ENCODE measurements at regions of chr3 and their contacts with region 1.

Region 1: GRCh38 chr3:107753480-107753879 is 230.7 kb downstream of the BBX start:
- DNase-seq: no peak
- H3K4me3 ChIP-seq: no peak overlapping the region
- H3K27ac ChIP-seq: no peak overlapping the region
- H3K4me1 ChIP-seq: no peaks in the 10 kb centered on the region
- H3K27me3 ChIP-seq: no peaks in the 10 kb centered on the region
- CTCF ChIP-seq: peak; percentile 47 to 71 (median 53)
- EP300 ChIP-seq: no peak
- POLR2A ChIP-seq: no peak
- RAD21 ChIP-seq: peak; percentile 42 to 46

Region 2: GRCh38 chr3:107574650-107575049 is 178.8 kb before region 1 on chr3:
- CTCF ChIA-PET with region 1: interaction called, 13 read pairs
- POLR2A ChIA-PET with region 1: interaction called, 3 read pairs
- DNase-seq: no peak
- H3K4me3 ChIP-seq: no peak overlapping the region
- H3K27ac ChIP-seq: no peak overlapping the region
- H3K4me1 ChIP-seq: peaks cover 2 to 10% (median 8%) of the 10 kb centered on the region in 4 experiments; a peak in 4 of 7 replicates
- H3K27me3 ChIP-seq: no peaks in the 10 kb centered on the region
- CTCF ChIP-seq: peak in 2 of 3 experiments; percentile 44 to 54; a peak in 2 of 4 replicates
- EP300 ChIP-seq: no peak
- POLR2A ChIP-seq: no peak
- RAD21 ChIP-seq: peak; percentile 78

Region 3: GRCh38 chr3:107660306-107660976 is 93.0 kb before region 1 on chr3:
- CTCF ChIA-PET with region 1: interaction called, 10 read pairs
- POLR2A ChIA-PET with region 1: no interaction called
- DNase-seq: no peak
- H3K4me3 ChIP-seq: no peak overlapping the region
- H3K27ac ChIP-seq: no peak overlapping the region
- H3K4me1 ChIP-seq: peaks cover 0 to 9% (median under 1%) of the 10 kb centered on the region in 4 experiments; a peak in 3 of 7 replicates
- H3K27me3 ChIP-seq: no peaks in the 10 kb centered on the region
- CTCF ChIP-seq: peak in 1 of 3 experiments; percentile 48; a peak in 1 of 4 replicates
- EP300 ChIP-seq: no peak
- POLR2A ChIP-seq: no peak
- RAD21 ChIP-seq: peak in 1 of 2 experiments; percentile 48; a peak in 3 of 4 replicates

Region 4: DNA sequence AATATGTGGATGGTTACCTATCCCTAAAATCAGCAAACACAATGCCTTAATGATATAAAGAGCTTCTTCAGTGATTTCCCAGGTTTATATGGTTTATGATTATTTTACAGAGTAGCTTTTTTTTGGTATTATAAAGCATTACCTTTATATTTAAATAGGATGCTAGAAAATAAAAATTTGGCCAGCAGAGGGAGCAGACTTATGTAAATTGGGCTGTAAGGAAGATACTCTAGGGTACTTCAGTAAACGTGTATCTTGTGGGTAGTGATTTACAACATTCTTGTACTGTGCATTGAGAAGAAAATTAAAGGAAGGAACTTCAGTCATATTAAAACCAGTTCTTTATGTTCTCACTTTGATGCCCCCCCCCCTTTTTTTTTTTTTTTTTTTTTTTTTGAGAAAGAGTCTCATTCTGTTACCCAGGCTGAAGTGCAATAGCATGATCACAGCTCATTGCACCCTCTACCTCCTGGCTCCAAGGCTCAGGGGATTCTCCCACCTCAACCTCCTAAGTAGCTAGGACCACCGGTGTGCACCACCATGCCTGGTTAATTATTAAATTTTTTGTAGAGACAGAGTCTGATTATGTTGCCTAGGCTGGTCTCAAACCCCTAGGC is 62.9 kb before region 1 on chr3:
- CTCF ChIA-PET with region 1: interaction called, 21 read pairs
- POLR2A ChIA-PET with region 1: no interaction called
- DNase-seq: no peak
- H3K4me3 ChIP-seq: no peak overlapping the region
- H3K27ac ChIP-seq: no peak overlapping the region
- H3K4me1 ChIP-seq: no peaks in the 10 kb centered on the region
- H3K27me3 ChIP-seq: no peaks in the 10 kb centered on the region
- CTCF ChIP-seq: peak in 2 of 3 experiments; percentile 22 to 43; a peak in 2 of 4 replicates
- EP300 ChIP-seq: no peak
- POLR2A ChIP-seq: no peak
- RAD21 ChIP-seq: peak in 1 of 2 experiments; percentile 18; a peak in 2 of 4 replicates

Region 5: DNA sequence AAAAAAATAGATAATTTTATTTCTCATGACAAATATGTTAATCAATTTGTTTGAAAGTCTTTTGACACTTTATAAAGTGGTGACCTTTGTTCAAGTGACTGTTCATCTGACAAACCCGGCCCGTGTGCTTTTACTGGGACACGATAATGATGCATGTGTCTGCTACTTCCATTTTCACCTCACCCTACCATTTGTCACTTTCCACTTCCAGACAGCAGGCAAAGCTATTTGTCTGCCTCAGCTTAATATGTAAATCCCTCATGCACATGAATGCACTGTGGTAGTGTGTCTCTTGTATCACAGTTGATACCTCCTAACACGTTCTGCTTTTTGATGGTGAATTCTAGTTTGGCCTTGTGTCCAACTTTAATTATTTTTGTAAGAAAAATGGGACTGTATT is 26.4 kb before region 1 on chr3:
- CTCF ChIA-PET with region 1: interaction called, 14 read pairs
- POLR2A ChIA-PET with region 1: no interaction called
- DNase-seq: no peak
- H3K4me3 ChIP-seq: no peak overlapping the region
- H3K27ac ChIP-seq: no peak overlapping the region
- H3K4me1 ChIP-seq: peaks cover 0 to 2% (median 1%) of the 10 kb centered on the region in 4 experiments; a peak in 1 of 7 replicates
- H3K27me3 ChIP-seq: no peaks in the 10 kb centered on the region
- CTCF ChIP-seq: no peak
- EP300 ChIP-seq: no peak
- POLR2A ChIP-seq: no peak
- RAD21 ChIP-seq: no peak

Region 6: GRCh38 chr3:107740992-107741896 is 12.2 kb before region 1 on chr3:
- CTCF ChIA-PET with region 1: interaction called, 28 read pairs
- POLR2A ChIA-PET with region 1: no interaction called
- DNase-seq: no peak
- H3K4me3 ChIP-seq: no peak overlapping the region
- H3K27ac ChIP-seq: no peak overlapping the region
- H3K4me1 ChIP-seq: no peaks in the 10 kb centered on the region
- H3K27me3 ChIP-seq: no peaks in the 10 kb centered on the region
- CTCF ChIP-seq: peak in 1 of 3 experiments; percentile 30; a peak in 1 of 4 replicates
- EP300 ChIP-seq: no peak
- POLR2A ChIP-seq: no peak
- RAD21 ChIP-seq: peak in 1 of 2 experiments; percentile 64; a peak in 3 of 4 replicates

Region 7: DNA sequence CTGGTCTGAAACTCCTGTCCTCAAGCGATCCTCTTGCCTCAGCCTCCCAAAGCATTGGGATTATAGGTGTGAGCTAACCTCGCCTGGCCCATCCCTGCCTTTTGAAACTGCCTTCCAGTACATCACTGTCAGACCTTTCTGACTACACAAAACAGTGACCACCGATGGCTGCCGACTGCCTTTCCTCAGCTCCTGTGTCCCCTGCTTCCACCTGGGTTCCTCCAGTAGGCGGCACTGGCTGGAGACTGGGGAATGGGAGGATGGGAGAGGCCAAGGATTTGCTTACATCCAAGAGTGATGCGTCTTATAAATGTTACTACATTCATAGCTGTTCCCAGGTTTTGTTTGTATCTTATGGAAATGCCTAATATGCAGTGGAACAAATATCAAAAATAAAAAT is 12.0 kb after region 1 on chr3:
- CTCF ChIA-PET with region 1: interaction called, 12 read pairs
- POLR2A ChIA-PET with region 1: no interaction called
- DNase-seq: no peak
- H3K4me3 ChIP-seq: no peak overlapping the region
- H3K27ac ChIP-seq: no peak overlapping the region
- H3K4me1 ChIP-seq: no peaks in the 10 kb centered on the region
- H3K27me3 ChIP-seq: no peaks in the 10 kb centered on the region
- CTCF ChIP-seq: peak in 2 of 3 experiments; percentile 17 to 33; a peak in 2 of 4 replicates
- EP300 ChIP-seq: no peak
- POLR2A ChIP-seq: no peak
- RAD21 ChIP-seq: no peak

Region 8: GRCh38 chr3:108006077-108006771 is 252.7 kb after region 1 on chr3:
- CTCF ChIA-PET with region 1: no interaction called
- POLR2A ChIA-PET with region 1: no interaction called
- DNase-seq: no peak
- H3K4me3 ChIP-seq: no peak overlapping the region
- H3K27ac ChIP-seq: no peak overlapping the region
- H3K4me1 ChIP-seq: no peaks in the 10 kb centered on the region; a peak in 1 of 7 replicates
- H3K27me3 ChIP-seq: no peaks in the 10 kb centered on the region
- CTCF ChIP-seq: no peak
- EP300 ChIP-seq: no peak
- POLR2A ChIP-seq: no peak
- RAD21 ChIP-seq: no peak

Measured in H1 (cell line).